GM12878 (cell line): ENCODE measurements at regions of chr3 and their contacts with region 1.

Region 1: GRCh38 chr3:70120357-70121121 is 121.0 kb downstream of the SAMMSON start:
- DNase-seq: peak; percentile 36
- ATAC-seq: peak; percentile 99
- H3K4me3 ChIP-seq: no peak overlapping the region
- H3K27ac ChIP-seq: no peak overlapping the region
- H3K4me1 ChIP-seq: no peaks in the 10 kb centered on the region
- H3K27me3 ChIP-seq: no peaks in the 10 kb centered on the region
- CTCF ChIP-seq: peak; percentile 88 to 96 (median 94)
- EP300 ChIP-seq: no peak
- POLR2A ChIP-seq: no peak
- RAD21 ChIP-seq: peak; percentile 89

Region 2: GRCh38 chr3:70108072-70108471 is 12.5 kb before region 1 on chr3:
- CTCF ChIA-PET with region 1: interaction called, 37 read pairs
- POLR2A ChIA-PET with region 1: no interaction called
- RAD21 ChIA-PET with region 1: no interaction called
- SMC1A ChIA-PET with region 1: interaction called, 3 read pairs
- in situ Hi-C with region 1: no loop called
- intact Hi-C with region 1: no loop called
- DNase-seq: no peak
- ATAC-seq: peak; percentile 66
- H3K4me3 ChIP-seq: no peak overlapping the region
- H3K27ac ChIP-seq: no peak overlapping the region
- H3K4me1 ChIP-seq: no peaks in the 10 kb centered on the region
- H3K27me3 ChIP-seq: no peaks in the 10 kb centered on the region
- CTCF ChIP-seq: peak; percentile 34 to 78 (median 76)
- EP300 ChIP-seq: no peak
- POLR2A ChIP-seq: no peak
- RAD21 ChIP-seq: peak; percentile 60; the same call in 1 of the 2 replicates

Region 3: GRCh38 chr3:70358978-70359580 is 238.5 kb after region 1 on chr3:
- CTCF ChIA-PET with region 1: interaction called, 26 read pairs
- POLR2A ChIA-PET with region 1: no interaction called
- RAD21 ChIA-PET with region 1: interaction called, 3 read pairs
- SMC1A ChIA-PET with region 1: interaction called, 11 read pairs
- in situ Hi-C with region 1: loop called (anchors 10 kb)
- intact Hi-C with region 1: loop called (anchors 1 kb)
- DNase-seq: no peak
- ATAC-seq: peak; percentile 47
- H3K4me3 ChIP-seq: no peak overlapping the region
- H3K27ac ChIP-seq: no peak overlapping the region
- H3K4me1 ChIP-seq: no peaks in the 10 kb centered on the region
- H3K27me3 ChIP-seq: no peaks in the 10 kb centered on the region; a peak in 1 of 4 replicates
- CTCF ChIP-seq: peak; percentile 49 to 62 (median 50); a peak in 5 of 6 replicates
- EP300 ChIP-seq: no peak
- POLR2A ChIP-seq: no peak
- RAD21 ChIP-seq: peak; percentile 67